OCI-LY7 (cell line): ENCODE measurements at regions of chr2 and their contacts with region 1.

Region 1: DNA sequence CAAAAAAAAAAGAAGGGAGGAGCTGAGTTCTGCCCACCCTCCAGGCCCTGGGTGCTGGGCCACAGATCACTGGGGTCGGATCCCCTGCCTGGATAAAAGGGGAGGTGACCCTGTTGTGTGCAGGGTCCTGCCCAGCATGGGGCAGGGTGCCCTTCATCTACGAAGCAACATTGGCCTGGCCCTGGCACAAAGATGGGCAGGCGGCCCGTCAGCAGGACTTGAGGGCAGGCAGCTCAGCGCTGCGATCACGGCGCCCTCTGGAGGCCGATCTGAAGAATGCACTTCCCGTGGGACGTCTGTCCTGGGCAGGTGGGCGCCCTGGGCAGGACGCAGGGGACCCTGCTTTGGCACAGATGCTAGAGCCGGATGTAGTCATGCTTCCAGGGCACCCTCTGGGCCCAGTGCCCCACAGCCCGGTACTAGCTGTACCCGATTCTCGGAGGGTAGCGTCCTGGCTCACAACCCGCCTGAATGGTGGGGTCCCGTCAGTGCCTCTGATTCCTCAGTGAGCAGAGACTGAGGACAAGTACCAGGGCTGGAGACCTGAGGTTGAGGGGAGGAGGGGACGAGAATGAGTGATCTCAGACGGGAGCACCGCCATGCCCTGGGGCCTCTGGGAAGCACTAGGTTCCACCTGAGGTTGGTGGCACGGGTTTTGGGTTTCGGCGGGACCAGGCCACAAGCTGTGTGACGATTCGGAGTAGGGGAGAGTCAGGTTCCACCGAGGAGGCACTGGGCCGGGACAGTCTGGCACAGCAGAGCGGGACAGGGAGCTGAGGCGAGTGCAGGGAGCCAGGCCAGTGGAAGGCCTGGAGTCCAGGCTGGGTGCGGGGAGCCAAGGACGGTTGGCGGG is 18.0 kb downstream of the ARID5A start:
- DNase-seq: peak; percentile 69
- H3K4me3 ChIP-seq: no peak overlapping the region
- H3K27ac ChIP-seq: no peak overlapping the region
- H3K4me1 ChIP-seq: no peaks in the 10 kb centered on the region
- CTCF ChIP-seq: peak; percentile 91

Region 2: GRCh38 chr2:96407041-96407918 is 147.2 kb before region 1 on chr2:
- CTCF ChIA-PET with region 1: no interaction called
- POLR2A ChIA-PET with region 1: no interaction called
- intact Hi-C with region 1: loop called (anchors 2 kb)
- DNase-seq: peak; percentile 72
- H3K4me3 ChIP-seq: no peak overlapping the region
- H3K27ac ChIP-seq: no peak overlapping the region
- H3K4me1 ChIP-seq: peaks cover 4% of the 10 kb centered on the region
- CTCF ChIP-seq: peak; percentile 86

Region 3: DNA sequence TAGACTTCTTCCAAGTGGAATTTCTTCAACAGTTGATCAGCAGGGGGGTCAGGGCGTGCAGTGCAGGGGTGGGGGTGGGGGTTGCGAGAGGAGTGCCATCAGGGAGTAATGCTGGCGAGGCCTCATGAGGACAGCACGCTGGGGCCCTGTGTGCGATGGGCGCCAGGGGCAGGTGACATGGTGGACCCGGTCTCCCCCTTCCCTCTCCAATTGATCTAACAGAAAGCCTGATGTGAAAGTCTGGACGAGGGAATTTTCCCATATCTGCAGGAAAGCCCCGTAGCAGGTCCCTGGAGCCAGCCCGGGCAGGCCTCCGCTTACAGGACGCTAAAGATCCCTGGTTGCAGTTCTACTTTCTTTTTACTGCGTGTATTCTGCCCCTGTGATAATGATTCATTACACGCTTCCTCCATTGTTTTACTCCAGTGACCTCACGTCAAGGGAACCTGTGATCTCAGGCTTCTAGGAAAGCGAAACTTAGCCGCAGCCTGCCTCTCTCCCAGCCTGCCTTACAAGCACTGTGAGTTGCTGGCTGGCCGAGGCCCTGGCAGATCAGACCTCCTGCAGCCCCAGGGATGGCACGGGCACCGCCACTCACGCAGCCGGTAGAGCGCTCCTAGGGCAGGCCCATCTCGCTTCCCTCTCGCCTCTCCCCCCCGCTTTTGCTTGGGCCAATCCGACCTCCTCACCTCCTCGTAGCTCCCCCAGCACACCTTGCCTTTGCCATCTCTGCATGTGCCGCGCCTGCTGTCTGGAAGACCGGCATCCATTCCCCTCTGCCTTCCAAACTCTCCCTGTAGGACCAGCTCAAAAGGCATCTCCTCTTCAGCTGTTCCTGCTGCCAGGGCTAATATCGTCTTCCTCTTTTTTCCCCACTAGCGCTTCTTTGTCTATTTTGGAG is 68.5 kb before region 1 on chr2:
- CTCF ChIA-PET with region 1: no interaction called
- POLR2A ChIA-PET with region 1: no interaction called
- intact Hi-C with region 1: no loop called
- DNase-seq: peak; percentile 5
- H3K4me3 ChIP-seq: peak overlapping the region; percentile 21
- H3K27ac ChIP-seq: no peak overlapping the region
- H3K4me1 ChIP-seq: no peaks in the 10 kb centered on the region
- CTCF ChIP-seq: no peak

Region 4: DNA sequence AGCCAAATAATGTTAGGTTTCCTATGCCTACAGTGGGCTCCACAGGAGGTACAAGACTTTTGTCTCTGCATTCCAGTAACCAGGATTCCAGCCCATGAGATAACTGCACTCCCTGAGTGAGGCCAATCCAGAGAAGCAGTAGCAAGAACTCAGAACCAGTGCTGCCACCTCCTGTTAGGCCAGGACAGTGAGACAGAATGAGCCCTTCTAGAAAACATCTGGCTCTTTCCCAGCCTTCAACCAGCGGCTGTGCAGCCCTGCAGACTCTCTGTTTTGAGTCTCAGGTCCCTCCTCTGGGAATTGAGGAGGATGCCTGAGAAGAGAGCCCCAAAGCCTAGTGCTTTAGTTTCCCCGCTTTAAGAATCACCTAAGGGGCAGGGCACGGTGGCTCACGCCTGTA is 26.3 kb after region 1 on chr2:
- CTCF ChIA-PET with region 1: no interaction called
- POLR2A ChIA-PET with region 1: no interaction called
- intact Hi-C with region 1: no loop called
- DNase-seq: peak; percentile 23
- H3K4me3 ChIP-seq: no peak overlapping the region
- H3K27ac ChIP-seq: no peak overlapping the region
- H3K4me1 ChIP-seq: no peaks in the 10 kb centered on the region
- CTCF ChIP-seq: peak; percentile 47